Naive thymus-derived CD4-positive, alpha-beta T cell (primary cell): ENCODE measurements at regions of chr12 and their contacts with region 1.

Region 1: DNA sequence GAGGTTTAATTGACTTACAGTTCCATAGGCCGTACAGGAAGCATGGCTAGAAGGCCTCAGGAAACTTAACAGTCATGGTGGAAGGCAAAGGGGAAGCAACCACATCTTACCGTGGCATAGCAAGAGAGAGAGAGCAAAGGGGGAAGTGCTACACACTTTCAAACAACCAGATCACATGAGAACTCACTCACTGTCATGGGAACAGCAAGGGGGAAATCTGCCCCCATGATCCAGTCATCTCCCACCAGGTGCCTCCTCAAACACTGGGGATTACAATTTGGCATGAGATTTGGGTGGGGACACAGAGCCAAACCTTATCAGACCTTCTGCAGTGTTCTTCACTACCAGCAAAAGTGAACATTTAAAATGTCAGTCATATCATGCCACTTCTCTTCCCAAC is 58.9 kb downstream of the USP15 start:
- DNase-seq: no peak
- ATAC-seq: peak; percentile 65
- H3K4me3 ChIP-seq: no peak overlapping the region
- H3K4me3 Mint-ChIP-seq: peak overlapping the region in 2 of 10 donors; percentile 2 to 15
- H3K27ac ChIP-seq: no peak overlapping the region
- H3K27ac Mint-ChIP-seq: peak overlapping the region in 6 of 9 donors; percentile 1 to 74 (median 51)
- H3K4me1 ChIP-seq: no peaks in the 10 kb centered on the region
- H3K4me1 Mint-ChIP-seq: peaks cover 27 to 59% (median 57%) of the 10 kb centered on the region in 7 donors
- H3K27me3 ChIP-seq: no peaks in the 10 kb centered on the region
- H3K27me3 Mint-ChIP-seq: no peaks in the 10 kb centered on the region

Region 2: DNA sequence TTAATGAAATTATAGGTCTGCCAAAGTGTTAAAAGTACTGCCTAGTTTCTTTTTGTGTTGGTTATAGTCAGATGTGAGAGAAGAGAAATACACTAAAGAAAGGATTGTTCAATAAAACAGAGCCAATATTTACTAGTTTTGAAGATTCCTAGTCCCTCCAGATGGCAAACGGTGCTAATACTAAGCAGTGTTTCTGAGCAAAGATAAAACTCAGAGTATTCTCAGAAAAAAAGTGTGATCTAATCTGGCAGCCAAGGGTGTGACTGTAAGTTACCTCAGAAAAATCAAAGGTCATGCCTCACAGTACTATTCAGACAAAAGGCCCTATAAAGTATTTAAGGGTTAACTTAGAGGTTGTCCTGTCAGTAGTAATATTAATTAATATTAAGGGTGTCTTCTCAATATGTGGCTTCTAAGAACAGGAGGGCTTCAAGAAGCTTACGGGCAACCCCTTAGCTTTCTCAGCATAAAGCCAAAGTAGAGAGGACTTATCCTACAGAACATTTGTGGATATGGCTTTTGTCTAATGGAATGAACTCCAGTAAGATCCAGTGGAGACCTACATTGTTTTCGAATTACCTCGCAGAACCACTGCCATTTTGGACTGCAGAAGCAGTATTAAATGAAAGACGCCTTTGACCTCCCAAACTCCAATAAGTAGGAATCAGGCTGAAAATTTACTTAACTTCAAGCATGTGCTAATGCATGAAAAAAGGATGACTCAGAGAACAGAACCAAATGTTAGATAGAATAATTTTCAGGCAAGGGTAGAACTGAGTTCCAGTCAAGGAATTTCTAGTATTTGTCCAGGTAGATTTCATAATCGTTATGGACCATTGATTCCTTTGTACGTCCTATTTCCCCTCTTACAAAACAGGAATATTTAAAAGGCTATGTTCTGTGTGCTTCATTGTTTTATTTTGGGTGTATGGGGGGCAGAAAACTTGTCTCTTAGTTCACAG is 12.2 kb before region 1 on chr12:
- CTCF ChIA-PET with region 1: interaction called, 3 read pairs
- POLR2A ChIA-PET with region 1: no interaction called
- intact Hi-C with region 1: loop called in 1 of 2 experiments (anchors 2 kb)
- DNase-seq: no peak
- ATAC-seq: no peak
- H3K4me3 ChIP-seq: no peak overlapping the region
- H3K4me3 Mint-ChIP-seq: peak overlapping the region in 2 of 10 donors; percentile 20 to 25
- H3K27ac ChIP-seq: no peak overlapping the region
- H3K27ac Mint-ChIP-seq: peak overlapping the region in 1 of 9 donors; percentile 18
- H3K4me1 ChIP-seq: peaks cover 0 to 12% of the 10 kb centered on the region in 2 donors
- H3K4me1 Mint-ChIP-seq: peaks cover 22 to 81% (median 74%) of the 10 kb centered on the region in 7 donors
- H3K27me3 ChIP-seq: no peaks in the 10 kb centered on the region
- H3K27me3 Mint-ChIP-seq: no peaks in the 10 kb centered on the region